ENCODE measurements at regions of chr5 and their contacts with region 1.

Region 1: GRCh38 chr5:132998556-132998955 is 27.8 kb downstream of the ZCCHC10 start:
- DNase-seq: no peak
- ATAC-seq: no peak
- H3K4me3 ChIP-seq: no peak overlapping the region
- H3K27ac ChIP-seq: no peak overlapping the region
- H3K4me1 ChIP-seq: no peaks in the 10 kb centered on the region
- H3K27me3 ChIP-seq: no peaks in the 10 kb centered on the region
- CTCF ChIP-seq: no peak
- EP300 ChIP-seq: no peak
- POLR2A ChIP-seq: no peak
- RAD21 ChIP-seq: no peak

Region 2: DNA sequence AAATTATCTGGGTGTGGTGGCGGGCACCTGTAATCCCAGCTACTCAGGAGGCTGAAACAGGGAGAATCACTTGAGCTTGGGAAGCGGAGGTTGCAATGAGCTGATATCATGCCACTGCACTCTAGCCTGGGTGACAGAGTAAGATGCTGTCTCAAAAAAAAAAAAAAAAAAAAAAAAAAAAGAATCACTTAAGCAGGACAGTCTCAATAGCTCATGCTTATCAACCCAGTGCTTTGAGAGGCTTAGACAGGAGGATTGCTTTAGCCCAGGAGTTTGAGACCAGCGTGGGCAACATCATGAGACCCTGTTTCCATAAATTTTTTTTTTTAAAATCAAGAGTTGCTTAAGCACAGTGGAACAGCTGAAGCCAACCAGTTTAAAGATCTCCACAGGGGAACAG is 82.5 kb before region 1 on chr5:
- CTCF ChIA-PET with region 1: no interaction called
- POLR2A ChIA-PET with region 1: no interaction called
- RAD21 ChIA-PET with region 1: no interaction called
- SMC1A ChIA-PET with region 1: no interaction called
- in situ Hi-C with region 1: no loop called
- intact Hi-C with region 1: no loop called
- DNase-seq: no peak
- ATAC-seq: no peak; the same call in 2 of the 3 replicates
- H3K4me3 ChIP-seq: no peak overlapping the region
- H3K27ac ChIP-seq: no peak overlapping the region
- H3K4me1 ChIP-seq: no peaks in the 10 kb centered on the region
- H3K27me3 ChIP-seq: no peaks in the 10 kb centered on the region
- CTCF ChIP-seq: no peak
- EP300 ChIP-seq: no peak
- POLR2A ChIP-seq: no peak
- RAD21 ChIP-seq: no peak

Region 3: DNA sequence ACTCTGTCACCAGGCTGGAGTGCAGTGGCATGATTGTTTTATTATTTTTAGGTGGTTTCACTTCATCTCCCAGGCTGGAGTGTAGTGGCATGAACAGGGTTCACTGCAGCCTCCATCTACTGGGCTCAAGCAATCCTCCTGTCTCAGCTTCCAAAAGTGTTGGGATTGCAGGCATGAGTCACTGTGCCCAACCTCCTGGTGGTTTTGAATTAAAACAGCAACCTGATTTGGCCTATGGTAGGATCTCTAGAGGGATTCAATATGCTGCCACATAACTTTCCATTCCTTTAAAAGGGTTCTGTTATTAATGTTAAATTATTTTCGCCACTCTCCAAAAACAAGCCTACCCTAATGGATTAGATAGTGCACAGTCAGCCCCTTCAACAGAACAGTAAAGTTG is 43.4 kb after region 1 on chr5:
- CTCF ChIA-PET with region 1: no interaction called
- POLR2A ChIA-PET with region 1: no interaction called
- RAD21 ChIA-PET with region 1: no interaction called
- SMC1A ChIA-PET with region 1: no interaction called
- in situ Hi-C with region 1: no loop called
- intact Hi-C with region 1: no loop called
- DNase-seq: no peak
- ATAC-seq: no peak
- H3K4me3 ChIP-seq: no peak overlapping the region
- H3K27ac ChIP-seq: no peak overlapping the region
- H3K4me1 ChIP-seq: no peaks in the 10 kb centered on the region
- H3K27me3 ChIP-seq: no peaks in the 10 kb centered on the region
- CTCF ChIP-seq: no peak
- EP300 ChIP-seq: no peak
- POLR2A ChIP-seq: no peak
- RAD21 ChIP-seq: no peak

Region 4: GRCh38 chr5:133384120-133384855 is 385.7 kb after region 1 on chr5:
- CTCF ChIA-PET with region 1: no interaction called
- POLR2A ChIA-PET with region 1: no interaction called
- RAD21 ChIA-PET with region 1: no interaction called
- SMC1A ChIA-PET with region 1: no interaction called
- in situ Hi-C with region 1: no loop called
- intact Hi-C with region 1: loop called (anchors 5 kb)
- DNase-seq: no peak
- ATAC-seq: no peak
- H3K4me3 ChIP-seq: no peak overlapping the region
- H3K27ac ChIP-seq: no peak overlapping the region
- H3K4me1 ChIP-seq: no peaks in the 10 kb centered on the region
- H3K27me3 ChIP-seq: peaks cover 0 to 1% of the 10 kb centered on the region in 2 experiments; a peak in 2 of 4 replicates
- CTCF ChIP-seq: no peak
- EP300 ChIP-seq: no peak
- POLR2A ChIP-seq: no peak
- RAD21 ChIP-seq: no peak

Measured in GM12878 (cell line).